Pancreas (tissue), 10 donors: ENCODE measurements at regions of chr5 and their contacts with region 1.

Region 1: DNA sequence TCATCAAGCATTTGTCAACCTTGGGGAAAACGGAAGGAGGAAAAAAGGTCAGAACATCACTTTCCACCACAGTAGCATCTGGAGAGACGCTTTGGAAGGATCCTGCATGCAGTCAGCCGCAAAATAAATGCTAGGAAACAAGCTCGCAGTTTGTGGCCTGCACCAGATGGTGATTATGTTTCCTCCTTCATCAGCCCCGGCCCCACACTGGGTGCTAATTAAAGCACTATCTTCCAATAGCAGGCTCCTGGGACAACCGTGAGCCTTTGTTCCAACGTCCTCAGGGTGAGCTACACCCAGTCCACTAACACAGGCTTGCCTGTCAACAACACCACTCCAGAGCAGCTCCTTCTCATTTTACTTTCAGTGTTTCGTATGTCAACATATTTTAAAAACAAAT is 64.0 kb downstream of the RNF130 start:
- DNase-seq: no peak
- ATAC-seq: peak in 3 of 4 donors; percentile 29 to 84 (median 83)
- H3K4me3 ChIP-seq: no peak overlapping the region
- H3K27ac ChIP-seq: no peak overlapping the region
- H3K4me1 ChIP-seq: no peaks in the 10 kb centered on the region
- H3K27me3 ChIP-seq: no peaks in the 10 kb centered on the region
- CTCF ChIP-seq: no peak

Region 2: GRCh38 chr5:179878222-179879009 is 129.2 kb before region 1 on chr5:
- intact Hi-C with region 1: no loop called
- DNase-seq: peak in 1 of 6 donors; percentile 48
- ATAC-seq: no peak
- H3K4me3 ChIP-seq: no peak overlapping the region
- H3K27ac ChIP-seq: no peak overlapping the region
- H3K4me1 ChIP-seq: no peaks in the 10 kb centered on the region
- H3K27me3 ChIP-seq: no peaks in the 10 kb centered on the region
- CTCF ChIP-seq: no peak

Region 3: DNA sequence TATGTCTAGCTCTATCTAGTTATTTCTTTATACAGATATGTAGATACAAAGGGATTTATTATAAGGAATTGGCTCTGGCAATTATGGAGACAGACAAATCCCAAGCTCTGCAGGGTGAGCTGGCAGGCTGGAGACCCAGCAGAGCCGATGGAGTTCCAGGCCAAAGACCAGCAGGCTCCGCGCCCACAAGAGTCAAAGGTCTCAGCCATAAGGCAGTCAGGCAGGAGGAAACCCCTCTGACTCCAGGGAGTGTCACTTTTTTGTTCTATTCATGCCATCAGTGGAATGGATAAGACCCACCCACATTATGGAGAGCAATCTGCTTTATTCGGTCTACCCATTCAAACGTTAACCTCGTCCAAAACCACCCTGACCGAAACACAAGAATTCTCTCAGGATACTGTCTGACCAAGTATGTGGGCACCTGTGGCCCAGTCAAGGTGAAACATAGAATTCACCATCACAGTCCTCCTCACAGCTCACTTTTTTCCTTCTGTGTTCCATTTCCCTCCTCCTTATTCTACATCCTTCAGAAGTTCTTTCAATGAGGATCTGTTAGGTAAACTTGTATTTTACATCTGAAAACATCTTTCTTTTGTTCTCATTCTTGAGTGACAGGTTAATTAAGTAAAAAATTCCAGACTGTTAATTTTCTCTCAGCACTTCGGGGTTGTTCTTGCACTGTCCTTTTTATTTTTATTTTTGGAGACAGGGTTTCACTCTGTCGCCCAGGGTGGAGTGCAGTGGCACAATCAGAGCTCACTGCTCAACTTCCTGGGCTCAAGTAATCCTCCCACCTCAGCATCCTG is 42.7 kb after region 1 on chr5:
- intact Hi-C with region 1: loop called in 1 of 3 experiments (anchors 10 kb)
- DNase-seq: no peak
- ATAC-seq: no peak
- H3K4me3 ChIP-seq: no peak overlapping the region
- H3K27ac ChIP-seq: peak overlapping the region in 2 of 4 donors; percentile 56 to 73
- H3K4me1 ChIP-seq: peaks cover 22 to 33% (median 31%) of the 10 kb centered on the region in 3 donors
- H3K27me3 ChIP-seq: no peaks in the 10 kb centered on the region
- CTCF ChIP-seq: no peak

Region 4: GRCh38 chr5:180153099-180153498 is 145.5 kb after region 1 on chr5:
- intact Hi-C with region 1: no loop called
- DNase-seq: no peak
- ATAC-seq: no peak
- H3K4me3 ChIP-seq: no peak overlapping the region
- H3K27ac ChIP-seq: no peak overlapping the region
- H3K4me1 ChIP-seq: no peaks in the 10 kb centered on the region
- H3K27me3 ChIP-seq: no peaks in the 10 kb centered on the region
- CTCF ChIP-seq: no peak

Region 5: GRCh38 chr5:180704368-180704869 is 696.8 kb after region 1 on chr5:
- intact Hi-C with region 1: no loop called
- DNase-seq: no peak
- ATAC-seq: no peak
- H3K4me3 ChIP-seq: no peak overlapping the region
- H3K27ac ChIP-seq: no peak overlapping the region
- H3K4me1 ChIP-seq: no peaks in the 10 kb centered on the region
- H3K27me3 ChIP-seq: peaks cover 0 to 3% (median 0%) of the 10 kb centered on the region in 4 donors
- CTCF ChIP-seq: no peak